ENCODE measurements at regions of chr1 and their contacts with region 1.

Region 1: DNA sequence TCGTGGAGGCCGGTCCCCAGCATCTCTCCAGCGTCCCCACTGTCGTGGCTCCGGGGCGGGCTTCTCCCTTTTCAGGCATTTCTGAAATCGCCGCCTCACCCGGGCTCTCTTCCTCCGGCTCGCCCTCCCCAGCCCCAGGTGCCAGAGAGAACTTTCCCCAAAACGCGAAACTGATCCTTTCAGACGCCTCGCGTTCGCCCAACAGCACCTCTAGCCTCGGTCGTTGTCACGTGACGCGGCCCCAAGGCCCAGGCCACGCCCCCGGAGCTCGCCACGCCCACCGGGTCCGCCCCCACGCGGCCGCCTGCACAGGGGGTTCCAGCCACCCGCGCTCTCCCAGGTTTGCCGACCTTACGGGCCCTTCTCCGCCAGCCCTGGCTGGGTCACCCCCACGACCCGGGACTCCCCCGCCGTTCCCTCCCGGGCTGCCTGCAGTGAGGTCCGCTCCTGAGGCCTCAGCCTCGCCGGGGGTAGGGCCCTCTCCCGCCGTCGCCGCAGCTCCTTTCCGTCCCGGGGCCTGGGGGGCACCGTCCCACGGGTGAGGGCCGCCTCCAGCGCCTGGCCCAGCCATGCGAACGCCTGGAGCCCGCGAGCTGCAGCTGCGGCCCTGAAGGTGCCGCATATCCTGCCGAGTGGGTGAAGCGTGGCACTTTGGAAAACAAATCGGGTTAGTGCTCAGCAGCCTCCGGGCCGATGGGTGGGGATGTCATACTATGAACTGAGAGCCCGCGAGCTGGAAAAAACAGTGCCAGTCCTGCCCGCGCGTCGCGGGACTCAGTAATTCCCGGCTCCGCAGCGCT is 21.0 kb downstream of the H3-3A start:
- DNase-seq: peak; percentile 98

Region 2: DNA sequence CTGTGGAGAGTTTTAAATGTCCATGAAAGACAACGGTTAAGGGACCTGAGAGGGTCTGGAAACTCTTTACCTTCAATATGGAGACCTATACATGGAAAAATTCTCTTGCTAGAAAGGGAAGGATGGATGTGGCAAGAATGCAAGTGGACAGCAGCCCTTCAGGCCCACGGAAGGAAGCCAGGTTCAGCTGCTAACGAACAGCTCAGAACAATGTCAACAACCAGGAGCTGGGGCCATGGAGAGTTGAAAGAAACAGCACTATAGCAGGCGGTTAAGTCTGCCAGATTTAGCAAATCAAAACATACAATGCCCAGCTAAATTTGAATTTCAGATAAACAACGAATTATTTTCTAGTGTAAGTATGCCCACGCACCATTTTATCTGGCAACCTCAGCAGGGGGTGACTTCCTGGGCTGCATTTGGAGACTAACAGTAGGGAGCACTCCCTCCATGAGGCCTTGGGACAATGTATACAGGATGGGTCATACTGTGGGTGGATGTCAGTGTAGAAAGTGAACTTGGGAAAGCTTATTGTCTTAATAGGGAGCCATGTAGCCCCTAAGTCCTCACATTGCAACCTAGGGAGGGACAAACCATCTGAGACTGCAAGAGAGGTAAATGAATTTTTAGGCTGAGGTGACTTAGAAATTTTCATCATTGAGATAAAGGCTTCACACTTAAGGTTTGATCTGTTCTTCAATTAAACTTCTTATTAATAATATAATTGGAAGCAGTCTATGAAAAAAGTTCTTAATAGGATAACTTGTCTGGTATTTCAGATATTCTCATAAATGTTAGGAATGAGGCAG is 28.8 kb before region 1 on chr1:
- CTCF ChIA-PET with region 1: no interaction called
- POLR2A ChIA-PET with region 1: no interaction called
- DNase-seq: no peak

Region 3: DNA sequence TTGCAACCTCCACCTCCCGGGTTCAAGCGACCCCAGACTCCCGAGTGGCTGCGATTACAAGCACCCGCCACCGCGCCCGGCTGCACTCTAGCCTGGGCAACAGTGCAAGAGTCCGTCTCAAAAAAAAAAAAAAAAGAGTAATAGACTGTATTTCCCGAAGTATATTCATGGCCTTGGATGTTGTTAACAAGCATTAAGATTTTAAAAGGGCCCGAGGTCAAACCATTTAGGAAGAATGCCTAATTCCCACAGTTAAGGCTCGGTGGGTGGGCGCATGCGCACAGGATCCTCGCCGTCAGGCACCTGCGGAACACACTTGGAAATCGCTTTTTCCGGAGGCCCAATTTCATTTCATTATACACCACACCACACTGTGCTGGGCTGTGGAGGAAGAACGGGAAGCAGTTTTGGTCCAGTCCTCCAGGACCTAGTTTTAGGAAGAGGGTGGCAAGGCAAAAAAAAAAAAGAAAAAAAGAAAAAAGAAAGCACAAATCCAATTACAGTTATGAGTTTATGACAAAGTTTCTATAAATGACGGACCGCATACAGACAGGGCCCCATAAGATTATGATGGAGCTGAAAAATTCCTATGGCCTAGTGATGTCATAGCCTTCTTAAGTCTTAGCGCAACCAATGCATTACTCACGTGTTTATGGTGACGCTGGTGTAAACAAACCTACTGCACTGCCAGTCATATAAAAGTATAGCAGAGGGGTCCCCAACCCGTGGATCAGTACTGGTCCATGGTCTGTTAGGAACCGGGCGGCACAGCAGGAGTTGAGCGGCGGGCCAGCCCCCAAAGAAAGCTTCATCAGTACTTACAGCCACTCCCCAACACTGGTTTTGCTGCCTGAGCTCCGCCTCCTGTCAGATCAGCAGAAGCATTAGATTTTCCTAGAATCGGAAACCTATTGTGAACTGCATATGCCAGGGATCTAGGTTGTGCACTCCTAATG is 17.2 kb after region 1 on chr1:
- CTCF ChIA-PET with region 1: interaction called, 3 read pairs
- POLR2A ChIA-PET with region 1: interaction called, 12 read pairs
- DNase-seq: peak; percentile 83

Region 4: DNA sequence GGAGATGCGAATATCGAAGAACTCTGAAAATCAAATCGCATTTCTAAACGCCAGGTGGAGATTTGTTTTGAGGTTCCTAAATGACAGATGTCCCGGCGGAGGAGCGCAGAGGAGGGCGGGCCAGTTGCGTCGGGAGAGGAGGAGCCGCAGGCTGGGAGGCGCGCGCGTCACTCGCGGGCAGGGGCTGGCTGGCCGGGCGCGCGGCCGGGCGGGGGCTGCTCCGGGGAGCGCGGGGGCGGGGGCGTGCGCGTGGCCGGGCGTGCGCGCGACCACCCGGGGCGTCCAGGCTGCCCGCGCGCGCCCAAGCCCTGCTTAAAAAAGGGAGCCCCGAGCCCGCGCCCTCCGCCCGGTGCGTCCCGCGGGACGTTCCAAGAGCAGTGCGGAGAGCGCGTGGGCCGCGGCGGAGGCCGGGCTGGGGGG is 26.3 kb after region 1 on chr1:
- CTCF ChIA-PET with region 1: no interaction called
- POLR2A ChIA-PET with region 1: interaction called, 47 read pairs
- DNase-seq: peak; percentile 98